ENCODE measurements at regions of chr7 and their contacts with region 1.

Region 1: DNA sequence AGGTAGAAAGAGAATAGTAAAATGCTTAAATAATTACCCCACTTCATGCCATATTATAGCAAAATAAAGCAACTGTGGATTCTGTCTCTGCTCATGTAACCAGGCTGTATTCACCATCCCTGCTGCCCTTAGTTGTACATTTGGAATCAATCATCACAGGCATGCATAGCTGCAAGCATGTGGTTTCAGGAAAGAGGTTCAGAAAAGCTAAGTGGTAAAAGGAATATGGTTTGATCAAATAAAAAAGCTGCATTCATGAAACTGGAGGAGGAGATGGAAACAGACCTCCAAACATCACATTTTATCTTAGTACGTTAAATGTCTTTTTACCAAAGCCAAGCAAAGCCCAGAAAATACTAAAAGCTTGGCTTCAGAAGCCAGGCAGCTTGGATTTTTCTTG is 81.3 kb downstream of the ADAM22 start:
- DNase-seq: no peak
- H3K4me3 ChIP-seq: no peak overlapping the region
- H3K27ac ChIP-seq: no peak overlapping the region
- H3K4me1 ChIP-seq: no peaks in the 10 kb centered on the region
- H3K27me3 ChIP-seq: no peaks in the 10 kb centered on the region
- CTCF ChIP-seq: no peak

Region 2: DNA sequence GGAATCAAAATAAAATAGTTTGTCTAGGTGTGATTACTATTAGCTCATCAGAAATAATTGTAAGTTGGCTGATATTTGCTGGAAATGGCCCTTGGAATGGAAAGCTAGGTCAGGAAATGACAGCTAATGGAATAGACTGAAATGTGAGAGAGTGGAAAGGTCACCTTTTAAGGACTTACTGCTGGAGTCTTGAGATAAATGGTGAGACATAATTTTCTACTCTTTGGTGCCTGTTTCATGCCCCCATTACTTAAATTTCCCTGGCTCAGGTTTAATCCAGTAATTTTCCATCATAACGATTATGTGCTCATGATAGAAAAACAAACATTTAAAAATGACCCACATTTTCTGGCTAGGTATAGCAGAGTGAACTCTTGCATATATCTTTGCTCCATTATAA is 42.3 kb after region 1 on chr7:
- CTCF ChIA-PET with region 1: no interaction called
- dilution Hi-C with region 1: loop called (anchors 5 kb)
- in situ Hi-C with region 1: no loop called
- intact Hi-C with region 1: no loop called
- DNase-seq: no peak
- H3K4me3 ChIP-seq: no peak overlapping the region
- H3K27ac ChIP-seq: no peak overlapping the region
- H3K4me1 ChIP-seq: no peaks in the 10 kb centered on the region
- H3K27me3 ChIP-seq: no peaks in the 10 kb centered on the region
- CTCF ChIP-seq: no peak

Region 3: DNA sequence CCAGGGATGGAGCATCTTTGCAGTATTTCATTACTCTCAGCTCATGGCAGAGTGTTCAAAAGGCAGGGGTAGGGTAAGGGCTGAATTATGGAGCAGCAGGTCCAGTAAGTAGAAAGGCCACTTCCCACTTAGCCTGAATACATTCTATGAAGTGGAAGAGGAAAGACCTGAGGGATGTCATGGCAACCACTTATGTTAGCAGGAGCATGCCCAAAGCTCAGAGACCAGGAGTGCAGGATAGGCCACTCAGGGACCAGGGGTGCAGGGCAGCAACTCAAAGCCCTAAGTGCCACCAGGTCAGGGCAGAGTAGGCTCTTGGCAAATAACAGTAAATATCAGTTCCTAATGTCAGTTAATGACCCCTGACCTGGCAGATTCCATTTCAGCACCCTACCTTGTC is 201.0 kb after region 1 on chr7:
- CTCF ChIA-PET with region 1: no interaction called
- dilution Hi-C with region 1: no loop called
- in situ Hi-C with region 1: no loop called
- intact Hi-C with region 1: no loop called
- DNase-seq: no peak
- H3K4me3 ChIP-seq: no peak overlapping the region
- H3K27ac ChIP-seq: no peak overlapping the region
- H3K4me1 ChIP-seq: peaks cover 26% of the 10 kb centered on the region
- H3K27me3 ChIP-seq: no peaks in the 10 kb centered on the region
- CTCF ChIP-seq: no peak

Region 4: GRCh38 chr7:88322151-88322550 is 306.8 kb after region 1 on chr7:
- CTCF ChIA-PET with region 1: no interaction called
- dilution Hi-C with region 1: no loop called
- in situ Hi-C with region 1: no loop called
- intact Hi-C with region 1: no loop called
- DNase-seq: no peak
- H3K4me3 ChIP-seq: no peak overlapping the region
- H3K27ac ChIP-seq: no peak overlapping the region
- H3K4me1 ChIP-seq: peaks cover 19% of the 10 kb centered on the region
- H3K27me3 ChIP-seq: no peaks in the 10 kb centered on the region
- CTCF ChIP-seq: no peak

Region 5: DNA sequence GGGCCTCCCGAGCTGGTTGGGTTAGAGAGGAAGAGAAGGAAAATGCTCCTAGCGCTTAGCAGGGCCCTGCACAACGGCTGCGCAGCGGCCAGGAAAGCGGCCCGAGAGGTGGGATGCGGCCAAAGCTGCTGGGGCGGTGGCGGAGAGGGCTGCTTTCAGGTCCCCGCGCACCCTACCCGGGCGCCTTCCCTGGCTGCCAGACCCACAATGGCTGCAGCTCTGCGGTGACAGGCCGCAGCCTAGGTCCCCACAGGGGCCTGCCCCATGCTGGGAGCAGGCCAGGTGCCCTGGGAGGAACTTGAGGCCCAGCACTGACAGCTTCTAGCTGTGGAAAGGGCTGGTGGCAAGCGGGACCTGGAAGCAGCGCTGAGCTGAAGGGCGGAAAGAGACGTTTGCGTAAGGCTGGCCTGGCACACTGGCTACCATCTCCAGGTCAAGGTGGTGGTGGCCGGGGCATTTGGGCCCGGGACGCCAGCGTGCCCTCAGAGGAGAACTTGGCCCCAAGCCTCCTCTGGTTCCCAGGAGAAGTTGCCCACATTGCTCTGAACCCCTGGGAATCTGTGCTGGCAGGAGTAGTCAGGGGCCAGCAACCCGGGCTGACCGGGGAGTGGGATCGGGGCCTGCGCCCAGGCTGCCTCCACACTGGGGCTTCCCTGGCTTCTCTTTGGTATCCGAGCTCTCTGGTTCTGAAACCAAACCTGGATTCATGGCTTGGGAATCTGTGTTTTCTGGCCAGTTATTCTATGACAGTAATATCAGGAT is 671.3 kb after region 1 on chr7:
- CTCF ChIA-PET with region 1: no interaction called
- dilution Hi-C with region 1: no loop called
- in situ Hi-C with region 1: no loop called
- intact Hi-C with region 1: no loop called
- DNase-seq: no peak
- H3K4me3 ChIP-seq: no peak overlapping the region
- H3K27ac ChIP-seq: no peak overlapping the region
- H3K4me1 ChIP-seq: no peaks in the 10 kb centered on the region
- H3K27me3 ChIP-seq: no peaks in the 10 kb centered on the region
- CTCF ChIP-seq: no peak

Measured in mammary epithelial cell (primary cell).